Dorsolateral prefrontal cortex (tissue), 120 donors: ENCODE measurements at regions of chr7 and their contacts with region 1.

Region 1: DNA sequence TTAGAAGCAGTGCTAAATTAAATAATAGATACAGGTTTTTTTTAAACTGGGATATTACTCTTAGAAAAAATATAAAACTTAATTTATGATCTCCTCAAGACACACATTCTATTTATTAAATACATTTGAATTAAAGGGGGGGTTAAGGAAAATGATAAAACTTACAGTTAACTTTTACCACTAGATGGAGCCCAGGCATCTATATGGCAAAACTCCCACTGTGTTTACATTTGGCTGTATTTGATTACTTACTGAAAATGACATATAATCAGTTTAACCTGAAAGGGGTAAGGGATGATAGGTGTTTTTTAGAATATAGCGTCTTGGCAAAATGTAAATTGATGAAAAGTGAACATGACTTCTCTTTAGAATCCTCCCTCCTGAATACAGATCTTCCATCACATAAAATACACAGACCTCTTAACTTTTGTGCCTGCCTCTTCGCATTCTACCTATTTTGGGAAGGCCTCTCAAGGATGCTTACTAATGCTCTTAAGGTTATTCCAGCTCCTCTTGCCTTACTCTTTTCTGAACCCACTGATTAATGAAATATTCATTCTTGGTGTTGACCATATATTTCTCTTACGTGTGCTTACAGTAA is 235.7 kb downstream of the AGMO start:
- DNase-seq: no peak
- H3K4me3 ChIP-seq: no peak overlapping the region
- H3K27ac ChIP-seq: peak overlapping the region in 1 of 59 donors; percentile 10
- H3K27me3 ChIP-seq: no peaks in the 10 kb centered on the region
- CTCF ChIP-seq: peak; percentile 44 to 84 (median 66)

Region 2: DNA sequence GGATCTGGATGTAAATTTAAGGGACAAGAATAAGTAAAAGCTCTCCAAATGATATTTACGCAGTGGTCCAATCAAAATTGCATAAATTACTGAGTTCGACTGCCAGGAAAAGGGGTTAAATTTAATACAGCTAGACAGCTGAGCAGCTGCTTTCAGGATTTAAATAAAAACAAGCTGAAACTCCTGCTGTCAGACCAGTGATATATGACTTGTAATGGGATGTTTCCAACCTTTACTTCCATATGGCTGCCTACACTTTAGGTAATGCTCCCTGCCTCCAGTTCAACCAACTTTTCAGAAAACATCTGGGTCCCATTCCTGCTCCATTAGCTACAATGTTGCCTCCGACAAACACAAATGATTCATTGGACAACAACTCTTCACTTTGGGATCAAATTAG is 97.3 kb before region 1 on chr7:
- intact Hi-C with region 1: no loop called
- DNase-seq: no peak
- H3K4me3 ChIP-seq: no peak overlapping the region
- H3K27ac ChIP-seq: no peak overlapping the region
- H3K27me3 ChIP-seq: no peaks in the 10 kb centered on the region
- CTCF ChIP-seq: no peak

Region 3: GRCh38 chr7:15368653-15369052 is 42.5 kb after region 1 on chr7:
- intact Hi-C with region 1: loop called in 1 of 2 experiments (anchors 5 kb)
- DNase-seq: no peak
- H3K4me3 ChIP-seq: no peak overlapping the region
- H3K27ac ChIP-seq: peak overlapping the region in 14 of 59 donors; percentile 5 to 92 (median 84)
- H3K27me3 ChIP-seq: no peaks in the 10 kb centered on the region
- CTCF ChIP-seq: no peak

Region 4: DNA sequence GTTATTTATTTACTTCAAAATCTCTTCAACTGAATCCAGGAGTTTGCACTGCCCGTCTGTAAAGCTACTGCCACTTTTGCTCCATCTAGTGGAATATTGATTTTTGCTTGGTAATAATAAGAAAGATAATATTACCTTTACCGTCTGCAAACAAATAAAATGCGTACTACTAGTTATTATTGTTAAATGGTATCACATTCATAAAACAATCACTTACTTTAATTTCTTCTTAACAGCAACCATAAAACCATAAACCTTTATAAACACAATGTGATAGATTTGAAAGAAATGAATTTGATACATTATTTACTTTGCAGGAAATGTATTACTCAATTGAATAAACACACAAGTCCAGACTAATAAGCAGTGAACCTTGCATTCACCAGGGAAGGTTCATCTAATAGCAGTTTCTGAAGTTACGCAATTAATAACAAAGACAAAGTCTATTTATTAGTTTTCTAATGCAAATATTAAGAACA is 229.3 kb after region 1 on chr7:
- intact Hi-C with region 1: loop called in 1 of 2 experiments (anchors 2 kb)
- DNase-seq: no peak
- H3K4me3 ChIP-seq: peak overlapping the region in 1 of 59 donors; percentile 2
- H3K27ac ChIP-seq: peak overlapping the region in 2 of 59 donors; percentile 42 to 47
- H3K27me3 ChIP-seq: no peaks in the 10 kb centered on the region
- CTCF ChIP-seq: peak in 50 of 56 donors; percentile 11 to 67 (median 45)

Region 5: GRCh38 chr7:15709978-15710377 is 383.8 kb after region 1 on chr7:
- intact Hi-C with region 1: loop called in 1 of 2 experiments (anchors 10 kb)
- DNase-seq: no peak
- H3K4me3 ChIP-seq: no peak overlapping the region
- H3K27ac ChIP-seq: no peak overlapping the region
- H3K27me3 ChIP-seq: no peaks in the 10 kb centered on the region
- CTCF ChIP-seq: no peak